ENCODE measurements at regions of chr14 and their contacts with region 1.

Region 1: DNA sequence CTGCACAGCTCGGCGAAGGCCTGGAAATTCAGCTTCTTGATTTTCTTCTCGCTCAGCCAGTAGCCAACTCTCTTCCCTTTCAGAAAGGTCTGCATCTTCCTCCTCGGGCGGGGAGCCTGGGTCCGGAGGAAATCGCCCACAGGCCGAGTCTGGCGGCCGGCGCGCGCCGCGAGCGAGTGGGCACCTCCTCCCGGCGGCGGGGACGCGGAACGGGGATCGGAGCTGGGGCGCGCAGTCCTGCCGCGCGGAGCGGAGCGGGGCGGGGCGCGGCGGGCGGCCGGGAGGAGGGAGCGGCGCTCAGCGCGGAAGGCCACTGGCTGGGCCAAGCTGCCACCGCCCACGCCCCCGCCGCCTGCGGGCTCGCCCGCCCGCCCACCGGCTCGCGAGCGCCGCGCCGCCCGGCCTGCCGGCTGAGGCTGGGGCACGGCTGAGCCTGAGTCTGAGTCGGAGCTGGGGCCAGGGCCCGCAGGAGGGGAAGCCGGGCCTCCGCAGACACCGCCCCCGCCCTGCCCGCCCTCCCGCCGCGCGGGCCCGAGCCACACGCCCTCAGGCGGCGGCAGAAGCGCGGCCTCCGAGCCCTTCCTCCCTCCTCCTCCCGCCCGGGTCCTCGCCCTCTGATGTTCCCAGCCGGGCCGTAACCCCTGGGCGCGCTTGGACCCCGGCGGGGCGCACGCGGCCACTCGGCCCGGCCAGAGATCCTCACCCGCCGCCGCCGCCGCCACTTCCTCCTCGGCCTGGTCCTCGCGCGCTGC is 480 bp downstream of the ITPK1 start:
- DNase-seq: peak; percentile 63 to 94 (median 83)
- ATAC-seq: peak; percentile 75
- H3K4me3 ChIP-seq: peak overlapping the region; percentile 59
- H3K4me3 Mint-ChIP-seq: peak overlapping the region; percentile 88
- H3K27ac ChIP-seq: peak overlapping the region in 1 of 2 donors; percentile 46
- H3K27ac Mint-ChIP-seq: peak overlapping the region; percentile 73
- H3K4me1 ChIP-seq: peaks cover 37% of the 10 kb centered on the region
- H3K4me1 Mint-ChIP-seq: peaks cover 30% of the 10 kb centered on the region
- H3K27me3 ChIP-seq: no peaks in the 10 kb centered on the region
- H3K27me3 Mint-ChIP-seq: no peaks in the 10 kb centered on the region
- CTCF ChIP-seq: no peak

Region 2: DNA sequence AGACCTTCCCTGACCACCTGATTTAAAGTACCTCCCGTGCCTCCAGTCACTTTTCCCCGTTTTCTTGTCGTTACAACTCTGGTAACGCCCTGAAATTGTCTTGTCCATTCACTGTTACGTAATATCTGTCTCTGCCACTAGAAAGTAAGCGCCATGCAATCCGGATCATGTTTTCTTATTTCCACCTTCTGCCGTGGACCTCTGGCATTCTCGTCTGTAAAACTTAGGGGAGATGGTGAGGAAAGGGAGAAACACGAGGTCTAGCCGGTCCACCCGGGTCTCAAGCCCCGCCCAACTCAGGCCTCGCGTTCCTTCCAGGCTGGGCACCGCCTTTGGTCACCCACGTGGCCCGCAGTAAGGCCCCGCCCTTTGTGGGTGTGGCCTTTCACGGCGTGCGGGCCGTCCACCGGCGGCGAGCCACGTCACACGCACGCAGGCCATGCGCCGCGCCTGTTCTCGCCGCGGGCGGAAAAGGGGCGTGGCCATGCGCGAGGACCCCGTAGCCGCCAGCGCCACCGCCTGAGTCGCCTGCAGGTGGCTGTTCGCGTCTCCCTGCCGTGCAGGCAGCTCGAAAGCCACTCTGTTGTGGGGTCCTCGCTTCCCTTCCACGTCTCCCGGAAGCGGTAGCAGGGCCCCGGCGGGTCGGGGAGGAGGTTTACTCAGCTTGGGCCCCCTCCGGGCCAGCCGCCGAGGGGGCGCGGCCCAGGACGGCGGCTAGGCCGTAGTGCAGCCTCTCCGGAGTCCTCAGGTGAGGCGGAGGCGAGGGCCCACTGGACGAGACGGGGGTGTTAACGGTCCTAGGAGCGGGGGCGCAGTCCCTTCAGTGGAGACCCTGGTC is 321.3 kb before region 1 on chr14 and contains the start of gene GOLGA5:
- CTCF ChIA-PET with region 1: no interaction called
- POLR2A ChIA-PET with region 1: no interaction called
- intact Hi-C with region 1: loop called in 1 of 2 experiments (anchors 5 kb)
- DNase-seq: peak; percentile 95 to 100 (median 98)
- ATAC-seq: peak; percentile 90
- H3K4me3 ChIP-seq: peak within 1 kb of the TSS; percentile 81
- H3K4me3 Mint-ChIP-seq: peak within 1 kb of the TSS; percentile 95
- H3K27ac ChIP-seq: peak within 1 kb of the TSS; percentile 59 to 77
- H3K27ac Mint-ChIP-seq: peak within 1 kb of the TSS; percentile 80
- H3K4me1 ChIP-seq: peaks cover 23% of the 10 kb centered on the region
- H3K4me1 Mint-ChIP-seq: peaks cover 45% of the 10 kb centered on the region
- H3K27me3 ChIP-seq: no peaks in the 10 kb centered on the region
- H3K27me3 Mint-ChIP-seq: no peaks in the 10 kb centered on the region
- CTCF ChIP-seq: no peak
- total RNA-seq, gene GOLGA5: 5.2 to 6.8 TPM

Region 3: GRCh38 chr14:93132470-93133065 is 17.3 kb after region 1 on chr14:
- CTCF ChIA-PET with region 1: interaction called, 60 read pairs
- POLR2A ChIA-PET with region 1: interaction called, 23 read pairs
- intact Hi-C with region 1: no loop called
- DNase-seq: peak in 6 of 14 experiments; percentile 9 to 66 (median 37)
- ATAC-seq: peak; percentile 56
- H3K4me3 ChIP-seq: no peak overlapping the region
- H3K4me3 Mint-ChIP-seq: no peak overlapping the region
- H3K27ac ChIP-seq: no peak overlapping the region
- H3K27ac Mint-ChIP-seq: no peak overlapping the region
- H3K4me1 ChIP-seq: no peaks in the 10 kb centered on the region
- H3K4me1 Mint-ChIP-seq: no peaks in the 10 kb centered on the region
- H3K27me3 ChIP-seq: no peaks in the 10 kb centered on the region
- H3K27me3 Mint-ChIP-seq: no peaks in the 10 kb centered on the region
- CTCF ChIP-seq: peak; percentile 36

Region 4: DNA sequence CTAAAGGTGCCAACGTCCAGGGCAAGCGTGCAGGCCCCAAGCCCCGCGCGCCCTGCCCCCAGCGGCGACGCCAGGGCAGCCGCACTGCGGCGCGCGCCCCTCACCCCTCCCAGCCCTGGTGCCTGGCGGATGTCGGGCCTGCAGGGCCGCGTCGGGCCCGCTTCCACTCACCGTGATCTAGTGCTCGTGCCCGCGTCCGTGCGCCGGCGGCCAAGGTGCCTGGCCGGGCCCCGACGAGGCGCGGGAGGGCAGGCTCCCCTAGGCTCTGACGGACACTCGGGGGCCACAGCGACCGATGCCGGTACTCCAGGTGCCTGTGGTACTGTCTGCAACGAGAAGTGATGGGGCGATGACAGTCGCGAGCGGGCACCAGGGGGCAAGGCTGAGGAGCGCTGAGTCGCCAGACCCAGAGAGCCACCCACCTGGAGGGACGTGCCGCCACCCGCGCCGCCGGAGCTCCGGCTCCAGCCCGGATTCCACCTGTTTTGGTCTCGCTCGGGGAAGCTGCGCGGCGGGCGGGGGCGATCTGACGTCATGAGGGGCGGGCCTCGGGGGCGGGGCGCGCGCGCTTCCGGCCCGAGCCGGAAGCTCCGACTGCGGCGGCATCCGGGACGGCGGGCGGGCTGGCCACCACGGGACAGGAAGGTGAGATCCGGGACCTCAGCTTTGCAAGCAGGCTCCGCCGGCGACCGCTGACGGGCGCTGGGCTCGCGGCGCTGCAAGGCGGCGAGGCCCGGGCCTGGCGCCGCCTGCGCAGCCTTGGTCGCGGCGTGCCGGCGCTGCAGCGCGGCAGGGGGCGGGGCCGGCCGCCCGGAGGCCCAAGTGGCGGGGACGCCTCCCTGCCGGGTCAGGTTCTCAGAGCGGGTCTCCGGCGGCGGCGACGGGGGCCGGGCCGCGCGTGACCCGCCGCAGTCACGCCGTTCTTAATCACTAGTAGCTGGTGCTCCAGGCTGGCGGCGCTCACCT is 69.4 kb after region 1 on chr14 and contains the starts of genes LYSET and MOAP1:
- CTCF ChIA-PET with region 1: interaction called, 20 read pairs
- POLR2A ChIA-PET with region 1: interaction called, 67 read pairs
- intact Hi-C with region 1: loop called in 1 of 2 experiments (anchors 2 kb)
- DNase-seq: peak; percentile 83 to 98 (median 91)
- ATAC-seq: peak; percentile 84
- H3K4me3 ChIP-seq: peak within 1 kb of the TSS; percentile 89
- H3K4me3 Mint-ChIP-seq: peak within 1 kb of the TSS; percentile 98
- H3K27ac ChIP-seq: peak within 1 kb of the TSS; percentile 96 to 97
- H3K27ac Mint-ChIP-seq: peak within 1 kb of the TSS; percentile 98
- H3K4me1 ChIP-seq: peaks cover 31% of the 10 kb centered on the region
- H3K4me1 Mint-ChIP-seq: peaks cover 56% of the 10 kb centered on the region
- H3K27me3 ChIP-seq: no peaks in the 10 kb centered on the region
- H3K27me3 Mint-ChIP-seq: no peaks in the 10 kb centered on the region
- CTCF ChIP-seq: peak; percentile 29
- total RNA-seq, gene LYSET: 5.8 TPM
- total RNA-seq, gene MOAP1: 127 to 130 TPM

Region 5: DNA sequence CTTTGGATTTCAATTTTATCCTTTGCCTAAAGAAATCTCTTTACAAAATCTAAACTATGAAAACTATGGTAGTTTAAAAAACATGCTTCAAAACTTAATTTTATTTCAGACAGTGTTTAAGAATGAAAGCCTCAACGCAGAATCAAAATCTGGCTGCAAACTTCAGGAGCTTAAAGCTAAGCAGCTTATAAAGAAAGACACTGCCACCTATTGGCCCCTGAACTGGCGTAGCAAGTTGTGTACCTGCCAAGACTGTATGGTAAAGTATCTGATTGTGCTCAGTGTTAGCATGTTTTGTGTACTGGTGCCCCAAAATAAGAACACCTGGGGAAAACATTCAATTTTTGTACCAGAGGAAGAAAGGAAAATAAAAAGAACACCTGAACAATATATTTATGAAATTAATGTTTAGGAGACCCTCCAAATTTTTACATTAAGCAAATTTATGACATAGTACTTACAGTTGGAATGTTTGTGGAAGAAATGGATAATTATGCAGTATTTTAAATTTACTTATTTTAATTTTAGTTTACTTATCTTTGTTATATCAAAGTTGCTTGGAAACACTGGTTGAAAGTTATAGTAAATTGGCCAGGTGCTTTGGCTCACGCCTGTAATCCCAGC is 104.0 kb after region 1 on chr14:
- CTCF ChIA-PET with region 1: interaction called, 15 read pairs
- POLR2A ChIA-PET with region 1: interaction called, 12 read pairs
- intact Hi-C with region 1: loop called (anchors 1 to 2 kb)
- DNase-seq: peak in 13 of 14 experiments; percentile 17 to 82 (median 37)
- ATAC-seq: peak; percentile 93
- H3K4me3 ChIP-seq: no peak overlapping the region
- H3K4me3 Mint-ChIP-seq: no peak overlapping the region
- H3K27ac ChIP-seq: no peak overlapping the region
- H3K27ac Mint-ChIP-seq: no peak overlapping the region
- H3K4me1 ChIP-seq: no peaks in the 10 kb centered on the region
- H3K4me1 Mint-ChIP-seq: no peaks in the 10 kb centered on the region
- H3K27me3 ChIP-seq: no peaks in the 10 kb centered on the region
- H3K27me3 Mint-ChIP-seq: no peaks in the 10 kb centered on the region
- CTCF ChIP-seq: peak; percentile 79

Region 6: DNA sequence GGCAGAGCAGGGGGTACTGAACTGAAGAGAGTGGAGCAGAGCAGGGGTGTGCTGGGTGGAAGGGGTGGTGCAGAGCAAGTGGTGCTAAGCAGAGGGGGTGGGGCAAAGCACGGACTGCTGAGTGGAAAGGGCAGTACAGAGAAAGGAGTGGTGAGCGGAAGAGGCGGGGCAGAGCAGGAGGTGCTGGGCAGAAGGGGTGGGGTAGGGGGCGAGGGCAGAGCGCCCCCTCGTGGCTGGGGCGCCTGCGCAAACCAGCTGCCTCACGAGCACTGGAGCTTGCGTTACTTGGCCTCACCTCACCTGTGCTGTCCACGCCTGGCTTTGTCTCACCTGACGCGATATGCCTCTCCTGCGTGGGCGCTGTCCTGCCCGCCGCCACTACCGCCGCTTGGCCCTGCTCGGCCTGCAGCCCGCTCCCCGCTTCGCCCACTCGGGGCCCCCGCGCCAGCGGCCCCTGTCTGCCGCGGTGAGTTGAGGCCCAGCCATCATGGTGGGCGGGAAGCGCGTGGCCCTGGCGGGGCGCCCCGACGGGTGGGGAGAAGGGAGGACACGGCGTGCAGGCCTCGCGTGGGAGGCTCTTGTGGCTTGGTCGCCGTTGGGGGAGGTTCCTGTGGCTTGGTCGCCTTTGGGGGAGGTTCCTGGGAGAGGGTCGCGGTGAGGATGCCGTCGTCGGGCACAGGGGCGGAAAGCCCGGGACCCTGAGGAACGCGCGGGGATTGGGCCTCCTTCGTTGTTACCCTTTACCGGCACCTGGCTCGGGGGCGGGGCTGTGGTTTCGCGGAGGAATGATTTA is 231.9 kb after region 1 on chr14 and contains the start of gene COX8C:
- CTCF ChIA-PET with region 1: no interaction called
- POLR2A ChIA-PET with region 1: no interaction called
- intact Hi-C with region 1: no loop called
- DNase-seq: peak in 1 of 14 experiments; percentile 10
- ATAC-seq: no peak
- H3K4me3 ChIP-seq: no peak within 1 kb of the TSS
- H3K4me3 Mint-ChIP-seq: no peak within 1 kb of the TSS
- H3K27ac ChIP-seq: no peak within 1 kb of the TSS
- H3K27ac Mint-ChIP-seq: no peak within 1 kb of the TSS
- H3K4me1 ChIP-seq: no peaks in the 10 kb centered on the region
- H3K4me1 Mint-ChIP-seq: no peaks in the 10 kb centered on the region
- H3K27me3 ChIP-seq: no peaks in the 10 kb centered on the region
- H3K27me3 Mint-ChIP-seq: no peaks in the 10 kb centered on the region
- CTCF ChIP-seq: no peak
- total RNA-seq, gene COX8C: not detected

Region 7: GRCh38 chr14:93748208-93749075 is 633.2 kb after region 1 on chr14:
- CTCF ChIA-PET with region 1: no interaction called
- POLR2A ChIA-PET with region 1: no interaction called
- intact Hi-C with region 1: no loop called
- DNase-seq: no peak
- ATAC-seq: no peak
- H3K4me3 ChIP-seq: no peak overlapping the region
- H3K4me3 Mint-ChIP-seq: no peak overlapping the region
- H3K27ac ChIP-seq: no peak overlapping the region
- H3K27ac Mint-ChIP-seq: no peak overlapping the region
- H3K4me1 ChIP-seq: no peaks in the 10 kb centered on the region
- H3K4me1 Mint-ChIP-seq: no peaks in the 10 kb centered on the region
- H3K27me3 ChIP-seq: no peaks in the 10 kb centered on the region
- H3K27me3 Mint-ChIP-seq: peaks cover 4% of the 10 kb centered on the region
- CTCF ChIP-seq: no peak

Region 8: GRCh38 chr14:94080471-94081289 is 965.4 kb after region 1 on chr14 and contains the start of gene DDX24:
- CTCF ChIA-PET with region 1: no interaction called
- POLR2A ChIA-PET with region 1: no interaction called
- intact Hi-C with region 1: loop called in 1 of 2 experiments (anchors 10 kb)
- DNase-seq: peak; percentile 93 to 99 (median 96)
- ATAC-seq: peak; percentile 92
- H3K4me3 ChIP-seq: peak within 1 kb of the TSS; percentile 98
- H3K4me3 Mint-ChIP-seq: peak within 1 kb of the TSS; percentile 99
- H3K27ac ChIP-seq: peak within 1 kb of the TSS; percentile 93
- H3K27ac Mint-ChIP-seq: peak within 1 kb of the TSS; percentile 97
- H3K4me1 ChIP-seq: peaks cover 31% of the 10 kb centered on the region
- H3K4me1 Mint-ChIP-seq: peaks cover 63% of the 10 kb centered on the region
- H3K27me3 ChIP-seq: no peaks in the 10 kb centered on the region
- H3K27me3 Mint-ChIP-seq: no peaks in the 10 kb centered on the region
- CTCF ChIP-seq: no peak
- total RNA-seq, gene DDX24: 678 to 711 TPM

Measured in CD4-positive, alpha-beta T cell (primary cell).